ENCODE measurements at regions of chr17 and their contacts with region 1.

Region 1: GRCh38 chr17:80101011-80101945 is at the start of gene GAA:
- DNase-seq: peak; percentile 68 to 97 (median 77)

Region 2: GRCh38 chr17:79991140-79991923 is 109.9 kb before region 1 on chr17:
- intact Hi-C with region 1: no loop called
- DNase-seq: peak; percentile 78 to 98 (median 89)

Region 3: DNA sequence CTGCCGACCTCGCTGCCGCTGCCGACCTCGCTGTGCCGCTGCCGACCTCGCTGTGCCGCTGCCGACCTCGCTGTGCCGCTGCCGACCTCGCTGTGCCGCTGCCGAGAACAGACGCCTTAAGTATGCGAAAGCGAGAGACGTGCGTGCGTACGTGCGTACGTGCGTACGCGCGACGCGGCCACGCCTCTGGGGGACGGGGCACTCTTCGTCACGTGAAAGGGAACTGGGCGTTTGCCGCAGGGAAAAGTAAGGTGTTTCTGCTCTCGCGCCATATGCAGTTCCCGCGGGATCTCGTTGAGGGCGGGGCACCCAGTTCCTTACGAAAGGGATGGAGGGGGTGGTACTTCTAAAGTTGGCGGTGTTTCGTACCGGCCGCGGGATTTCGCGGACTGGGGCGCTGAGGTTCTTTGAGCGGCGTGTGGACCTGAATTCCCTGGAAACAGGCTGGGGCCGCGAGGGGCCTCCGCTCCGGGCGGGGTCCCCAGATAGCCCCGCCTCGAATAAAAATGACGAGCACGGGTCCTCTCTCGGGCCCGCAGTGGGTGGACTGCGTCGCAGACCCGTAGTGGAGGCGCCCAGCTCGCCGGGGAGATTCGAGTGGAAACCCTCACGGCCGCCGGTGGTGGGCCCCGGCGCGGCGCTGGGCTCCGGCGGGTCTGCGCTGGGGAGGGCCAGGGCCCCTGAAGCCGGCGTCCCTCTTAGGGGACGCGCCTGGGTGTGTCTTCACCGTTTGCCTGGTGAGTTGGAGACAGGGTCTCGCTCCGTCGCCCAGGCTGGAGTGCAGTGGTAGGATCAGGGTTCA is 46.0 kb after region 1 on chr17 and contains the start of gene EIF4A3:
- intact Hi-C with region 1: loop called (anchors 5 kb)
- DNase-seq: peak; percentile 95 to 100 (median 97)